Naive thymus-derived CD4-positive, alpha-beta T cell (primary cell): ENCODE measurements at regions of chr17 and their contacts with region 1.

Region 1: DNA sequence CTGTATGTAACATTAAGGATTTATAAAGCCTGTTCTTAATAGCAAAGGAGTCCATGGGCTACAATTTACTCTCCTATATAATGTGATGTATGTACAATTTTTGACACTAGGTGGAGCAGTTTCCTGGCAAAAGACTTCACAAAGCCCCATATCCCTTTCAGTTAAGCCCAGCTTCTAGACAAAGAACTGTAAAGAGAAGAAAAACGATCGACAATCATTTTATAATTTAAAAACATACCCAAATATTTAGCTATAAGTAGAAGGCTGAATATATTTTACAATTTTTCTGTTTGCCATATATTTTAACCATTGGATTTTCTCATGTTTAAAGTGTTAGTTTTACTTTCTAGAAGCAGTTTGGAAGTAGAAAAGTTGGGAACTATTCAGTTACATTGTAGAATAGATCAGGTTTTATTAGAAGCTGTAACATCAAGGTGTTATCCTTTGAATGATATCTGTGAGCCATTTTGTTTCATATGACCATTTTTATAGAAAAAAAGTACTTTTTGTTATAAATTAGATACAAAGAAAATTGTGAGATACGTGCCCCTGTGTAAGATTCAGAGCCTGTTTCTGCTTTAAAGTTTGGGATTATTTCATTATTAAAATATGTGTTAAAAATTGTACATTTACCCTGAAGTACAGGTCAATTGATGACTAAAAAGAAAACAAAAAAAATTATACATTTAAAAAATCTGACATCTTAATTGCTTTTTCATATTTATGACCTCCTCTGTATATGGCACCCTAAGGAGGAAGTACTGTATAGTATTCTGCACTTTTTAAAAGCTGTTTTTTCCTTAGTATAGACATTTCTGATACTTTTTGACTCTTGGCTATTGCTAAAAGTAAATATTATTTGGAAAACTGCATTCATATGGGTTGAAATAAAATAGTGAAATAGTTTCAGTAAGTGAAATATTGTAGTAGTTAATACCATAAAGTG is 46.3 kb downstream of the VMP1 start:
- DNase-seq: peak in 7 of 9 donors; percentile 48 to 79 (median 71)
- ATAC-seq: peak; percentile 98
- H3K4me3 ChIP-seq: peak overlapping the region; percentile 15
- H3K4me3 Mint-ChIP-seq: peak overlapping the region in 9 of 10 donors; percentile 16 to 75 (median 53)
- H3K27ac ChIP-seq: peak overlapping the region; percentile 47
- H3K27ac Mint-ChIP-seq: peak overlapping the region; percentile 36 to 94 (median 76)
- H3K4me1 ChIP-seq: peaks cover 0 to 5% of the 10 kb centered on the region in 2 donors
- H3K4me1 Mint-ChIP-seq: peaks cover 9 to 63% (median 24%) of the 10 kb centered on the region in 7 donors
- H3K27me3 ChIP-seq: no peaks in the 10 kb centered on the region
- H3K27me3 Mint-ChIP-seq: no peaks in the 10 kb centered on the region

Region 2: GRCh38 chr17:59561042-59561441 is 192.8 kb before region 1 on chr17:
- CTCF ChIA-PET with region 1: no interaction called
- POLR2A ChIA-PET with region 1: no interaction called
- intact Hi-C with region 1: no loop called
- DNase-seq: no peak
- ATAC-seq: no peak
- H3K4me3 ChIP-seq: no peak overlapping the region
- H3K4me3 Mint-ChIP-seq: no peak overlapping the region
- H3K27ac ChIP-seq: no peak overlapping the region
- H3K27ac Mint-ChIP-seq: peak overlapping the region in 1 of 9 donors; percentile 25
- H3K4me1 ChIP-seq: peaks cover 2 to 5% of the 10 kb centered on the region in 2 donors
- H3K4me1 Mint-ChIP-seq: peaks cover 0 to 12% (median 9%) of the 10 kb centered on the region in 7 donors
- H3K27me3 ChIP-seq: no peaks in the 10 kb centered on the region
- H3K27me3 Mint-ChIP-seq: peaks cover 0 to 3% (median 0%) of the 10 kb centered on the region in 5 donors

Region 3: GRCh38 chr17:59719526-59719925 is 34.3 kb before region 1 on chr17:
- CTCF ChIA-PET with region 1: no interaction called
- POLR2A ChIA-PET with region 1: no interaction called
- intact Hi-C with region 1: no loop called
- DNase-seq: no peak
- ATAC-seq: no peak
- H3K4me3 ChIP-seq: no peak overlapping the region
- H3K4me3 Mint-ChIP-seq: no peak overlapping the region
- H3K27ac ChIP-seq: no peak overlapping the region
- H3K27ac Mint-ChIP-seq: no peak overlapping the region
- H3K4me1 ChIP-seq: no peaks in the 10 kb centered on the region
- H3K4me1 Mint-ChIP-seq: peaks cover 20 to 52% (median 40%) of the 10 kb centered on the region in 7 donors
- H3K27me3 ChIP-seq: no peaks in the 10 kb centered on the region
- H3K27me3 Mint-ChIP-seq: no peaks in the 10 kb centered on the region

Region 4: GRCh38 chr17:59829217-59830006 is 75.6 kb after region 1 on chr17:
- CTCF ChIA-PET with region 1: interaction called, 11 read pairs
- POLR2A ChIA-PET with region 1: interaction called, 3 read pairs
- intact Hi-C with region 1: no loop called
- DNase-seq: peak in 1 of 9 donors; percentile 51
- ATAC-seq: peak; percentile 89
- H3K4me3 ChIP-seq: no peak overlapping the region
- H3K4me3 Mint-ChIP-seq: peak overlapping the region in 2 of 10 donors; percentile 61 to 86
- H3K27ac ChIP-seq: peak overlapping the region; percentile 50
- H3K27ac Mint-ChIP-seq: peak overlapping the region; percentile 49 to 97 (median 69)
- H3K4me1 ChIP-seq: peaks cover 14 to 46% of the 10 kb centered on the region in 2 donors
- H3K4me1 Mint-ChIP-seq: peaks cover 19 to 81% (median 43%) of the 10 kb centered on the region in 7 donors
- H3K27me3 ChIP-seq: no peaks in the 10 kb centered on the region
- H3K27me3 Mint-ChIP-seq: no peaks in the 10 kb centered on the region

Region 5: DNA sequence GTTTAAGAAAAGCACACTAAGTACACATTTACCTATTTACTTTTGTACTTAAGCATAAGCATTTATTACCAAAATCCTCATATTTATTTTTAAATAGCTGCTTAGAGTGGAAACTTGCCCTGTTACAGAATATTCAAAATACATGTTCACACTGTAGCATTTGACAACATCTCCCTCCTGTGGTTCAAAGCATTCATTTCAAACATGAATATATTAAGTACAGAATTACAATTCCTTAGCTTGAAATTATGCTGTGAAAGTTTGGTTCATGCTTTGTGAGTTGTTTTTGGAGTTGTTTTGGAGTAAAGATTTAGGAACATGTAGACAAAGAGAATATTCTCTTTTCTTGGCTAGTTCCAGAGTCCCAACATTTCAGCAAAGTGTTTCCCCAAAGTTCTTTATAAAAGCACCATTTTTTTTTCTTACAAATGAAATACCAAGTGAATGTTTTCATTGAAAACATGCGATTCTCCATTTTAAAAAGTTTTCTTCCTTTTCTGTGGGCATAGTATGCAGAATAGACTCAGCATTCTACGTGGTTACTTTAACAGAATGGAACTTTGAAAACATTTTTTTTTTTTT is 105.7 kb after region 1 on chr17:
- CTCF ChIA-PET with region 1: interaction called, 6 read pairs
- POLR2A ChIA-PET with region 1: interaction called, 4 read pairs
- intact Hi-C with region 1: loop called (anchors 1 kb)
- DNase-seq: peak in 4 of 9 donors; percentile 28 to 40 (median 35)
- ATAC-seq: peak; percentile 77
- H3K4me3 ChIP-seq: no peak overlapping the region
- H3K4me3 Mint-ChIP-seq: no peak overlapping the region
- H3K27ac ChIP-seq: no peak overlapping the region
- H3K27ac Mint-ChIP-seq: peak overlapping the region in 6 of 9 donors; percentile 59 to 80 (median 70)
- H3K4me1 ChIP-seq: no peaks in the 10 kb centered on the region
- H3K4me1 Mint-ChIP-seq: peaks cover 0 to 26% (median 5%) of the 10 kb centered on the region in 7 donors
- H3K27me3 ChIP-seq: no peaks in the 10 kb centered on the region
- H3K27me3 Mint-ChIP-seq: no peaks in the 10 kb centered on the region

Region 6: DNA sequence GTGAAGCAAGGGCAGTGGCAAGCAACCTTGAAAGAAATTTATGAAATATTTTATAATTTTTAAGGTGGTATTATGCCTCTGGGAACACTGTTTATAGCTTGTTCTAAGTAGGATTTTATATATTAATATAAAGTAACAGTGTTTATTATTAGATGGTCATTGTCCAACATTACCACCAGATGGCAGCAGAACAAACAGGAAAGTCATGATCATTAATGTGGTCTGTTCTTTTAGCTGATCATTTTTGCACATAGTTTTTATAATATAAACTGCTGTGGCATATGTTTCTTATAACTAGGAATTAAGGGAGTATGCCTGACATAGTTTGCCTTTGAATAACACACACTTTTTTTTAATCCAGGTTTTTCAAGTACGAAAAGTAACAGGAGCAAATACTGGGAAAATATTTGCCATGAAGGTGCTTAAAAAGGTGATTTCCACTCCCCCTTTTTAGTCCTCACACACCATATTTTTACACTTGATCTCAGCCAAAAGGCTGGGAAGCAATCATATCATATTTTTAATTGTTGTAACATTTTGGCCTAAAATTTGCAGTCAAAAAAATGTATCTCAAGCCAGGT is 160.6 kb after region 1 on chr17:
- CTCF ChIA-PET with region 1: interaction called, 4 read pairs
- POLR2A ChIA-PET with region 1: no interaction called
- intact Hi-C with region 1: loop called in 1 of 2 experiments (anchors 1 kb)
- DNase-seq: peak in 7 of 9 donors; percentile 12 to 55 (median 44)
- ATAC-seq: peak; percentile 79
- H3K4me3 ChIP-seq: no peak overlapping the region
- H3K4me3 Mint-ChIP-seq: no peak overlapping the region
- H3K27ac ChIP-seq: no peak overlapping the region
- H3K27ac Mint-ChIP-seq: no peak overlapping the region
- H3K4me1 ChIP-seq: no peaks in the 10 kb centered on the region
- H3K4me1 Mint-ChIP-seq: peaks cover 0 to 6% (median 3%) of the 10 kb centered on the region in 7 donors
- H3K27me3 ChIP-seq: no peaks in the 10 kb centered on the region
- H3K27me3 Mint-ChIP-seq: no peaks in the 10 kb centered on the region

Region 7: DNA sequence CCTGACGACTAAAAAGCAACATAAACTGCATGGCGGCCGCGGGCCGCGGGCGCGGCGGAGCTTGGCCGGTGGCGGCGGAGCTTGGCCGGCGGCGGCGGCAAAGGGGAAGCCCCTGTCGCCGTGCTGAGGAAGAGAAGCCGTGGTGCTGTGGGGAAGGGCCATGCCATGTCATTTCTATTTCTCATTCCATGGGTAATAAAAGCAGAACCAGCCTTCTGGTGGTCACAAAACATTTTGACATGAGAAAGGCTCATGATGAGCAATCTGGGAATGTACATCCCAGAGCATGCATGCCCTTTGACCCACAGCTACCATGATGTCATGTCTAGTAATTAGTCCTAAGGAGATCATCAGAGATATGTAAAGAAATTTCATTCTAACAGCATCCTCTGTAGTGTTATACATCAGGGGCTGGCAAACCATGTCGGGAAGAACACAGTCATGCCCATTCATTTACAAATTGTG is 348.9 kb after region 1 on chr17:
- CTCF ChIA-PET with region 1: no interaction called
- POLR2A ChIA-PET with region 1: no interaction called
- intact Hi-C with region 1: loop called in 1 of 2 experiments (anchors 10 kb)
- DNase-seq: peak in 4 of 9 donors; percentile 11 to 40 (median 16)
- ATAC-seq: peak; percentile 90
- H3K4me3 ChIP-seq: no peak overlapping the region
- H3K4me3 Mint-ChIP-seq: peak overlapping the region; percentile 52 to 81 (median 65)
- H3K27ac ChIP-seq: no peak overlapping the region
- H3K27ac Mint-ChIP-seq: no peak overlapping the region
- H3K4me1 ChIP-seq: peaks cover 0 to 3% of the 10 kb centered on the region in 2 donors
- H3K4me1 Mint-ChIP-seq: peaks cover 0 to 19% (median 9%) of the 10 kb centered on the region in 7 donors
- H3K27me3 ChIP-seq: peaks cover 0 to 3% of the 10 kb centered on the region in 2 donors
- H3K27me3 Mint-ChIP-seq: peaks cover 15 to 51% (median 42%) of the 10 kb centered on the region in 5 donors